Endothelial cell of umbilical vein (primary cell): ENCODE measurements at regions of chr15 and their contacts with region 1.

Region 1: GRCh38 chr15:77617476-77618230 is 15.1 kb downstream of the LINGO1 start:
- DNase-seq: no peak
- H3K4me3 ChIP-seq: no peak overlapping the region
- H3K27ac ChIP-seq: no peak overlapping the region
- H3K4me1 ChIP-seq: no peaks in the 10 kb centered on the region
- H3K27me3 ChIP-seq: no peaks in the 10 kb centered on the region
- CTCF ChIP-seq: peak; percentile 42 to 44
- POLR2A ChIP-seq: no peak

Region 2: DNA sequence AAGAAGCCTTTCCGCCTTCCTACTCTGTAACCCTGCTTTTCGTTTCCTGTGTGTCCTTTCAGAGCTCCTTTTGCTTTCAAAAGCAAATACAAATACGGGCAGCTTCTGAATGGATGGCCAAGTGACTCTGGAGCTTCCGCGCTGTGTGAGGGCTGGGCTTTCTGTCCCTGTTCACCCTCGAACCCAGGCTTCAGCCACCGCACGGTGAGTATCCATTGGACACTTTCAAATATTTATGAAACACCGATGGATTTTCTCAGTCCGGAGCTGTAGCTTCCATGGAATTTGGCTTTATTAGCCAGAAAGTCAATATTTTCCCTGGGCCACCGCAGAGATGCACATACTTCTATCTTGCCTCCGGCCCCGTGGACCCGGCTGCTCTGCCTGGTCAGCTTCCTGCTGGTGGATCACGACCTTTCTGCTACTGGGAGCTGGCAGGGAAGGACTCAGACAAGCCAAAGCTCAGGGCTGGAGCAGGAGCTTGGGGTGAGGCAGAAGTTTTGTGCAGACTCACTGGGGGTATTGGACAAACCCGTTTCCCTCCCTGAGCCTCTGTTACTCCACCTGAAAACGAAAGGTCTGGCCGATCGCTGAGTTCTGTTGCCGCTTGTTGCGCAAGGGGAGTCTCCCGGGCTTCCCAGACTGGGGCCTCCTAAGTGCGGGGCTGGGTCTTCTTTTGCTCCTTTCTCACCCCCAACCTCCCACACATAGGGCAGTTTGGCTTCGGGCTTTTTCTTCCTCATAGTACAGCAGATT is 48.5 kb before region 1 on chr15:
- CTCF ChIA-PET with region 1: no interaction called
- POLR2A ChIA-PET with region 1: no interaction called
- dilution Hi-C with region 1: no loop called
- intact Hi-C with region 1: no loop called
- DNase-seq: no peak
- H3K4me3 ChIP-seq: no peak overlapping the region
- H3K27ac ChIP-seq: no peak overlapping the region
- H3K4me1 ChIP-seq: no peaks in the 10 kb centered on the region
- H3K27me3 ChIP-seq: no peaks in the 10 kb centered on the region
- CTCF ChIP-seq: no peak
- POLR2A ChIP-seq: no peak

Region 3: DNA sequence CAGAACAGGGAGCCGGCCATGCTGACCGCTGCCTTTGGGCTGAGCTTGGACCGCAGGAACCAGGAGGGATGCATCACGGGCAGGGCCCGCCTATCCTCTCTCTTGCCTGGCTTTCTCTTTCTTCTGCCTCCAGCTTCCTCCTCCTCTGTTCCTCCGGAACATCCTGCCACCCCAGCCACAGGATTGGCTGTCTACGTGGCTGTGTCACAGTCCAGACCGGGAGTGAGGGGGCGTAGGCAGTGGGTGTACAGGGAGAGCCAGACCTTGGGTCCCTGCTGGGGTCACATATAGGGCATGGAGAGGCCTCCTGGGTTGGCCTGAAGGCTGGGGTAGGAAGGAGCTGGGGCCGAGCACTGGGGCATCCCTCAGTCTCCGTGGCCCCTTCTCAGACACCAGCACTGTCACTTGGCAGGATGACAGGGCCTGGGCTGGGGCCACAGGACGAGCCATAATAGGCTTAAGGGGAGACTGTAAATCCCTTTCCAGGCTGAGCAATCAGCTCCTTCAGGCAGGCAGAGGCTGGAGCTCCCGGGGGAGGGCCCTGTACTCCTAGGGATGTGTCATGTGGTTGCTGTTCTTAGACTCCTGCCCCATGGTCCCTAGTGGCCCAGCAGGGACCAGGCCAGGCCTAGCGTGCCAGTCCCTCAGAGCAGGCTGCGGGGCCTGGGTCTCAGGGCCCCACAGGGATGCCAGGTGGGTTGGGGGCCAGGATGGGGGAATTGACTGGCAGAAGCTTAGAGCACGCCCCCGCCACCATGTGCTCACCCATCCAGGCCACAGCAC is 10.4 kb before region 1 on chr15:
- CTCF ChIA-PET with region 1: interaction called, 35 read pairs
- POLR2A ChIA-PET with region 1: no interaction called
- dilution Hi-C with region 1: no loop called
- intact Hi-C with region 1: no loop called
- DNase-seq: no peak
- H3K4me3 ChIP-seq: no peak overlapping the region
- H3K27ac ChIP-seq: no peak overlapping the region
- H3K4me1 ChIP-seq: peaks cover 3% of the 10 kb centered on the region
- H3K27me3 ChIP-seq: no peaks in the 10 kb centered on the region
- CTCF ChIP-seq: no peak
- POLR2A ChIP-seq: no peak